ENCODE measurements at regions of chr4 and their contacts with region 1.

Region 1: DNA sequence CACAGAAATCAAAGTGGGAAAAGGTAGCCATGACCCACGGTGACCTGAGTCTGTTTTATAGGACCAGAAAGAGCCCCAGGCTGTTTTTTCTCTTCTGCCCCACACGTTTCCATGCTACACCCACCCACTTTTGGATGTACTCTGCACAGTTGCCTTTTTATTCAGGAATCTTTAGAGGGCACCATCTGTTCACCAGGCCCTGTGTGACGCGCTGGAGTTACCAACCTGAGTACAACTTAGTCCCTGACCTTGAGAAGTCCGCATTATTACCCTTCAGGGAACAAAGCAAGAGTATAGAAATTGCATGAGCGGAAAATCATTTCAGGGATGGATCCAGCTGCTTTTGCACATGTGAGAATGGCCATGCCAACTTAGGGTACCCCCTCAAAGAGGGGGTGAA is 207.8 kb upstream of the GATB start:
- DNase-seq: no peak
- H3K4me3 ChIP-seq: no peak overlapping the region
- H3K27ac ChIP-seq: no peak overlapping the region
- H3K4me1 ChIP-seq: no peaks in the 10 kb centered on the region
- H3K27me3 ChIP-seq: no peaks in the 10 kb centered on the region
- CTCF ChIP-seq: no peak

Region 2: GRCh38 chr4:151948351-151949016 is 20.2 kb before region 1 on chr4:
- CTCF ChIA-PET with region 1: no interaction called
- dilution Hi-C with region 1: no loop called
- in situ Hi-C with region 1: no loop called
- intact Hi-C with region 1: loop called (anchors 2 kb)
- DNase-seq: peak; percentile 83
- H3K4me3 ChIP-seq: no peak overlapping the region
- H3K27ac ChIP-seq: peak overlapping the region; percentile 67
- H3K4me1 ChIP-seq: peaks cover 5% of the 10 kb centered on the region
- H3K27me3 ChIP-seq: no peaks in the 10 kb centered on the region
- CTCF ChIP-seq: no peak

Region 3: GRCh38 chr4:152063885-152064240 is 95.2 kb after region 1 on chr4:
- CTCF ChIA-PET with region 1: no interaction called
- dilution Hi-C with region 1: no loop called
- in situ Hi-C with region 1: no loop called
- intact Hi-C with region 1: no loop called
- DNase-seq: no peak
- H3K4me3 ChIP-seq: no peak overlapping the region
- H3K27ac ChIP-seq: no peak overlapping the region
- H3K4me1 ChIP-seq: no peaks in the 10 kb centered on the region
- H3K27me3 ChIP-seq: no peaks in the 10 kb centered on the region
- CTCF ChIP-seq: no peak

Measured in mammary epithelial cell (primary cell).